Motor neuron (in vitro differentiated cells): ENCODE measurements at regions of chr7 and their contacts with region 1.

Region 1: GRCh38 chr7:140810830-140811556 is 113.7 kb downstream of the BRAF start:
- ATAC-seq: peak; percentile 84 to 100 (median 96)
- H3K4me3 ChIP-seq: no peak overlapping the region
- H3K27ac ChIP-seq: no peak overlapping the region
- H3K4me1 ChIP-seq: no peaks in the 10 kb centered on the region

Region 2: GRCh38 chr7:140889645-140890044 is 78.7 kb after region 1 on chr7:
- in situ Hi-C with region 1: no loop called
- ATAC-seq: no peak
- H3K4me3 ChIP-seq: no peak overlapping the region
- H3K27ac ChIP-seq: no peak overlapping the region
- H3K4me1 ChIP-seq: no peaks in the 10 kb centered on the region

Region 3: DNA sequence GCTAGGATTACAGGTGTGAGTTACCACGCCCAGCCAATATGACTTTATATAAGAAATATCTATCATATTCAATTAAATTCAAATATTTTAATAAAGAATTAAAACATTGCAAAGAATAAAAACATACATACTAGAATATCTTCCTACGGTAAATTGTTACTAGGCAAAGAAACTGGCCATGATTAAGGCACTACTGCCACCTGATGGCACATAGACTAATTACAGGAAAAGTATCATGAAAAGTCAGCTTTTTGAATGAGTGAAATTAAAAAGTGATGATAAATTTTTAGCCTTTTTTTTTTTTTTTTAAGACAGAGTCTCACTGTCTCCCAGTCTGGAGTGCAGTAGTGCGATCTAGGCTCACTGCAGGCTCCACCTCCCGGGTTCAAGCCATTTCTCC is 172.8 kb after region 1 on chr7:
- in situ Hi-C with region 1: loop called in 1 of 9 experiments (anchors 25 kb)
- ATAC-seq: no peak
- H3K4me3 ChIP-seq: no peak overlapping the region
- H3K27ac ChIP-seq: no peak overlapping the region
- H3K4me1 ChIP-seq: no peaks in the 10 kb centered on the region

Region 4: GRCh38 chr7:141001122-141001521 is 190.1 kb after region 1 on chr7:
- in situ Hi-C with region 1: loop called in 3 of 9 experiments (anchors 10 to 25 kb)
- ATAC-seq: no peak
- H3K4me3 ChIP-seq: no peak overlapping the region
- H3K27ac ChIP-seq: no peak overlapping the region
- H3K4me1 ChIP-seq: no peaks in the 10 kb centered on the region

Region 5: DNA sequence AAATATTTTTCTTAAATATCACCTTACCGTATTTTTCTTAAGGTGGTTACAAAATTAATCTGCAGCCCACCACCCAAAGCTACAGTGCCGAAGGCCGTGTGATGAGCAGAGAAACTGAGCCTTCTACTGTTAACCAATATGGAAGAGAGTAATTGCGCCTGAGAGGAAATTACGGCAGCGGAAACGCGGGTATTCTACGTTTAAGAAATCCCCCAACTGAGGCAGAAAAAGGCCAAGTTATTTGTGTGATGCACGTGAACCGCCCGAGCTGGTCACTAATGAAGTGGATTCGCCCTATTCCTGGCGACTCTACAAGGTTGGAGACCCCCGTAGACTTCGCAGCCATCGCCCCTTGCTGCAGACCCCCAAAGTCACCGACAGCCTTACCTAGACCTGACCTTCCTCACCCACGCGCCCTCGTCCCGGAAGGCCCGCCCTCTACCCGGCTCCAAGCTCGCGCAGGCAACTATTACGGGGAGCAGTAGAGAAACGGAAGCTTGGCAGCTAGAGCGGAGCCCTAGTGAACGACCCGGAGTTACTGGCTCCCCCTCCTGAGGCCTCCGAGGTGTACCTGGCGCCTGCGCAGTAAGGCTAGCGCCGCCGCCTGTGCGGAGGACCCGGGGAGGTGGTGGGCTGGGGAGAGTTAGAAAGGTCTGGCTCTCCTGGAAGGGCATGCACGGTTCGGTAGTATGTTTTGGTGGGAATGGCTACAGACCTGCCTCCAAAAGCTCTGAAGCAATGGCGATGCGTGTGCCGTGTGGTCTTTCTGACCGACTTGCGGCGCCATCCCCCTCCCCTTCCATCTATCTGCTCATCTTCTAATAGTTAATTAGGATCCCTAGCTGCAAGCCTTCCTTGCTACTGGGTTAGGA is 203.8 kb after region 1 on chr7 and contains the start of gene MRPS33:
- in situ Hi-C with region 1: loop called in 4 of 9 experiments (anchors 10 to 25 kb)
- ATAC-seq: peak; percentile 94 to 99 (median 98)
- H3K4me3 ChIP-seq: peak within 1 kb of the TSS; percentile 52 to 67 (median 62)
- H3K27ac ChIP-seq: peak within 1 kb of the TSS; percentile 70 to 76
- H3K4me1 ChIP-seq: peaks cover 4 to 10% of the 10 kb centered on the region in 2 donors
- total RNA-seq, gene MRPS33: 69.1 to 182 (median 76.6) TPM